Heart right ventricle (tissue), 16 donors: ENCODE measurements at regions of chr4 and their contacts with region 1.

Region 1: GRCh38 chr4:29033703-29034102 is 1686.5 kb upstream of the PCDH7 start:
- DNase-seq: no peak
- ATAC-seq: no peak
- H3K4me3 ChIP-seq: no peak overlapping the region
- H3K27ac ChIP-seq: no peak overlapping the region
- H3K4me1 ChIP-seq: no peaks in the 10 kb centered on the region
- H3K27me3 ChIP-seq: no peaks in the 10 kb centered on the region
- CTCF ChIP-seq: no peak

Region 2: DNA sequence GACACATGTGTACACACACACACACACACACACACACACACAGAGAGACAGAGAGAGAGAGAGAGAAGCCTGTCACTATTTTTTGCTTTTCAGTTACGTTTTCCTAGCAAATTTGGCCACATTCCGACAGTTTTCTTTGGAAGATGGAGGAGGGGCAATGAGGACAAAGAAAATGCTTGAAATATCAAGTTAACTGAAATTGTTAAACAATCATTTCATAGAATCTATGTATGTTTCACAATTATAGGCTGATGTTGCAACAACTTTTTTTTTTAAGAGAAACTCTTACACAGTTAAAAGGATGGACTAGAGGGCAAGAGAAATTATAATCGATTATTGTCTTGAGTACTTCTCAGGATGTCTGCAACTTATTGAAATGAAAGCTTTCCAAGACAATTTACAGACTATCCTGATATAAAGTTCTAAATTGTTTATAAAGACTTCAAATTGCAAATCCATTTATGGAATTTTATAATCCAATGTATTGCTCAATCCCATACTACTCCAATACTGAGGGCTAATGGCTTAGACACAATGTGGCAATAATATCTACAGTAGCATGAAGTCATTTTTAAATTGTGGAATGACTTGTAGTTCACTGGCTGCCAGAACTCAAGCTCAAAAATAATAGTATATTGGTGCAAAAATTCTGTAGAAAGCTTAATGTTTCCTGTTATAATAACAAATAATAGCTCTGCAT is 1039.5 kb after region 1 on chr4:
- intact Hi-C with region 1: loop called in 1 of 10 experiments (anchors 5 kb)
- DNase-seq: no peak
- ATAC-seq: no peak
- H3K4me3 ChIP-seq: no peak overlapping the region
- H3K27ac ChIP-seq: no peak overlapping the region
- H3K4me1 ChIP-seq: no peaks in the 10 kb centered on the region
- H3K27me3 ChIP-seq: no peaks in the 10 kb centered on the region
- CTCF ChIP-seq: no peak